Right ventricle myocardium inferior (tissue), 1 donor: ENCODE measurements at regions of chr19 and their contacts with region 1.

Region 1: DNA sequence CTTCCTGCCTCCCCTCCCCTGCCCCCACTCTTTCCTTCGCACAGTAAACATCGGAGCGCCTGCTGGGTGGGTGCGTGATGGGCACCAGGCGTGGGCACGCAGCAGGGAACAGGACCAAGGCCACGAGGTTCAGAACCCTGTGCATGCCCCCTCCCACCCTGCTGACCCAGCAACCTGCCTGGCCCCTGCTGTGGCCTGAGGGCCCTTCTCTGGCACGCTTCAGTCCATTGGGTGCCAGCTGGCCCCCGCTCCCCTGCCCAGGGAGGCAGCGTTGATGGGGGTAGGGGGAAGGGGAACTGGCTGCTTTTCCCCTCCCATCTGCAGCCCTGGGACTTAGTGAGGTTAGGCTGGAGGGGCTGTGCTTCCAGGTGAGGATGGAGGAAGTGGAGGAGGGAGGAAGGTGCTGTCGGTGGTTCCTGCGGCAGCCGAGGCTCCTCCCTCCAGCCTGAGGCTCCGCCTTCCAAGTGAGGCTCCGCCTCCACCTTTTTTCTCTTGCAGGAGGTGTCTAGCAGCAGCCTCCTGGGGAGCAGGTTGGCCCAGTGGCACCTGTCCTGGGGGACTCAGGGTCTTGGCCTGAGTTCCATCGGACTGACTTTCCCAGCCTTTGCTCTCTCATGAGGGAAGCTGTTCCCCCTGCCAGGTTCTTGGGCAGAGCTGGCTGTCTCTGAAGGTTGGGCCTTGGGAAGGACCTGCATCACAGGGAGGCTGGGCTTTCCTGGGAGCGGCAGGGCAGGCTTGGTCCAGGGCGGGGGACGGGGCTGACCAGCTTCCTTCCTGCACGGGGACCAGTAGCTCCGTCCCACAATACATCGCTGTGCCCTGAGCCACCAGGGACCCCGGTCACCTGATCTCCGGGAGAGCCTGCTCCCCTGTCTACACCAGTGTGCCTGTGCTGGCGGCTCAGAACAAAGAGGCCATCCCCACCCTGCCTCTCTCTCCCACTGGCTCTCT is 7.3 kb downstream of the PIAS4 start:
- DNase-seq: no peak
- ATAC-seq: peak; percentile 28

Region 2: DNA sequence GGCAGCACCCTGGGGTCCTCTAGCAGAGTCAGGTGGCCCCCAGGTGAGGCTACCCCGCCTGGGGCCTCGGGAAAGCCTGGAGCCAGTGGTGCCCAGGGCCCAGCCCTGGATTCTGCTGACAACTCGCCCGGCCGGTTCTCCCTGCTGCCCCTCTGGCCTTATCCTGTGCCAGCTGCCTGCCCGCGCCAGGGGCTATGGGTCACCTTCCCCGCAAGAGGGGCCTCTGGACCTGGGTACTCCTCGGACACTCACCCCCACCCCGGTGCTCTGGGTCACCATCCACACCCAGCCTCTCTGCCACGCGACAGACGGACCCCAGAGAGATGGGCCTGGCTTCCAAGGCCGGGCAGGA is 27.9 kb after region 1 on chr19:
- intact Hi-C with region 1: no loop called
- DNase-seq: no peak
- ATAC-seq: no peak

Region 3: GRCh38 chr19:4053000-4053497 is 38.2 kb after region 1 on chr19:
- intact Hi-C with region 1: no loop called
- DNase-seq: no peak
- ATAC-seq: no peak

Region 4: DNA sequence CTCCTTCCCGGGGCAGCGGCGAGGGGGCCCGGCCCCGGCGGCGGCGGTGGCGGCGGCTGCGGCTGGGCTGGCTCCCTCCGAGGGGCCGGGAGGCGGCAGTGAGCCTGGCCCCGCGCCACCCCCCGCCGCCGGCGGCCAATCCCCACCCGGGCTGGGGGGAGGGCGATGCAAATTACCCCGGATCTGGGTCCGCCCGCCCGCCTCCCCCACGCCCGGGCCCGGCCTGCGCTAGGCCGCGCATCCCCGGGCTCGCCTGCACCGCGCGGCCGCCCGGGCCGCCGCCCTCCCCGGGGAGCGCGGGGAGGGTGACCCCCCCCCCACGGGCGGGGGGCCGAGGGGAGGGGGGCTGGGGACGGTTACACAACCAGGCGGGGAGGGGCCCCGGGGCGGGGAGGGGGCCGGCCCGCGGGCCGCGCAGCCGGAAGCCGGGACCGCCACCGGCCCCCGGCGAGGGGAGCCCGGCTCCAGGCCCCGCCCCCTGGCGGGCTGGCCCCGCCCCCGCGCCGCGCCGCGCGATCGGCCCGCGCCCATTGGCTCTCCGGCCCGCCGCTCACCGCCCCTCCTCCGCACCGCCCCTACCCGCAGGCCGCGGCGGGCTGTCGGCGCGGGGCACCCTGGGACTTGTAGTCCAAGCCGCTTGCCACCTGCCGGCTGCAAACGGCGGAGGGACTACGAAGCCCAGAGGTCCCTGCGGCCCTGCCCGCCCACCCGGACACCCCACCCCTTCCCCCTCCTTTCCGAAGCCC is 50.8 kb after region 1 on chr19:
- intact Hi-C with region 1: loop called (anchors 5 kb)
- DNase-seq: peak; percentile 98
- ATAC-seq: peak; percentile 88

Region 5: DNA sequence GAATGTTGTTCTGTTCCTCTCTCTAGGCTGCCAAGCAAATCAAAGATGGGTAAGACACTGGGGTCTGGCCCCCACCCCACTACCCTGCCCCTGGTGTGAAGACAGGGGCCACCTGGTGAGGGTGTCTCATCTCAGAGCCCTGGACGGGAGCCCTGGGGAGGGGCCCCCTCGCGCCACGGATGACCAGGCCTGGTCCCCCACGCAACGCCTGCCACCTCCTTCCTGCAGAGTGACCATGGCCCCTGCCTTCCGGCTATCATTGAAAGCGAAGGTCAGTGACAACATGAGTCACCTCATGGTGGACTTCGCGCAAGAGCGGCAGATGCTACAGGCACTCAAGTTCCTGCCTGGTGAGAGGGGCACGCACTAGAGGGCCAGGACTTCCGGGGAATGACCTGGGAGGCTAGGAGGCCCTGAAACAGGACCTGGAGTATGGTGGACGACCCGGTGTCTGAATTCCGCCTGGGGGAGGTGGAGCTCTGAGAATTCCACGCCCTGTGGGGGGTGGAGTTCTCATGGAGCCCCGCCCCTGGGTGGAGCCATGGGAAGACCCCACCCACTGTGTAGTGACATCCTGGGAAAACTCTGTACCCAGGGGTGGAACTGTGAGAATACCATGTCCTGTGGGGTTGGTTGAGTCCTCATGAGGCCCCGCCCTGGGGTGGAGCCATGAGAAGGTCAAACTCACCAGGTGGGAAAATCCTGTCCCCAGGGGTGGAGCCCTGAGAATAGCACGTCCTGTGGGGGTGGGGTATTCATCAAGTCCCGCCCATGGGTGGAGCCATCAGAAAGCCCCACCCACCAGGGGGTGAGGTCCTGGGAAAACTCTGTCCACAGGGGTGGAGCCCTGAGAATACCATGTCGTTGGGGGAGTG is 295.7 kb after region 1 on chr19:
- intact Hi-C with region 1: no loop called
- DNase-seq: no peak
- ATAC-seq: no peak